Activated CD4-positive, alpha-beta T cell treated with anti-CD3 and anti-CD28 coated beads for 36 hours (primary cell): ENCODE measurements at regions of chr1 and their contacts with region 1.

Region 1: GRCh38 chr1:220733090-220733601 is 15.0 kb upstream of the MTARC2 start:
- DNase-seq: peak; percentile 88
- ATAC-seq: peak; percentile 93
- H3K4me3 Mint-ChIP-seq: no peak overlapping the region
- H3K27ac Mint-ChIP-seq: peak overlapping the region; percentile 29
- H3K4me1 Mint-ChIP-seq: peaks cover 8% of the 10 kb centered on the region
- H3K27me3 Mint-ChIP-seq: peaks cover 3% of the 10 kb centered on the region

Region 2: DNA sequence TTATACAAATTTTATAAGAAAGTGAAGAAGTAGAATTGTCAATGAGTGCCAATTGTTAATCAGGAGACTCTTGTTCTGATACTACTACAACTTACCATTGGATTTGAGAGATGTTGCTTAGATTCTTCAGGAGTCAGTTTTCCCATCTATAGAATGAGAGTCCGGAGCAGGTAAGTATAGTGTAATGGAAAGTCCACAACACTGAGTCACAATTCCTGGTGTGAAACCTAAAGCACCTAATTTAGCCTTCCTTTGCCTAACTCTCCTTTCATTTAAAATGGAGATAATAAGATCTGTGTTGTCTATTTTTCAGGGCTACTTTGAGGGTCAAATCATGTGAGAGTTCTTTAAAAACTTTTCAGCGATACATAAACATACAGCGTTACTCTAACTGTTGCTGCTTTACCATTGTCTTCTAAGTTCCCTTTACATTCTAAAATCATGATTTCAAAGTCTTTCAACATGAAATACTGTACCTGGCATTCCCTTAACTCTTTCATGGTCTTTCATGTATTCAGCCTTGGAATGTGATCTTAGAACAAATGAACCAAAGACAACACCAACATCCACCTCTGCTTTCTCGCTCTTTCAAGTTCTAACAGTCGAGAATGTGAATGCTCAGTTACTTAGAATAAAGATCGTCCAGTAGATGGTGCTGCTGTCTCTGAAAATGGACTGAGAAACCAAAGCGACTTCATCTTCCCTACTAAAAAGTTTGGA is 895.7 kb before region 1 on chr1:
- CTCF ChIA-PET with region 1: no interaction called
- POLR2A ChIA-PET with region 1: no interaction called
- intact Hi-C with region 1: loop called in 1 of 2 experiments (anchors 5 kb)
- DNase-seq: no peak
- ATAC-seq: no peak
- H3K4me3 Mint-ChIP-seq: no peak overlapping the region
- H3K27ac Mint-ChIP-seq: no peak overlapping the region
- H3K4me1 Mint-ChIP-seq: no peaks in the 10 kb centered on the region
- H3K27me3 Mint-ChIP-seq: peaks cover 16% of the 10 kb centered on the region

Region 3: GRCh38 chr1:220217383-220217988 is 515.7 kb before region 1 on chr1:
- CTCF ChIA-PET with region 1: no interaction called
- POLR2A ChIA-PET with region 1: no interaction called
- intact Hi-C with region 1: loop called in 1 of 2 experiments (anchors 5 kb)
- DNase-seq: no peak
- ATAC-seq: no peak
- H3K4me3 Mint-ChIP-seq: no peak overlapping the region
- H3K27ac Mint-ChIP-seq: no peak overlapping the region
- H3K4me1 Mint-ChIP-seq: peaks cover 26% of the 10 kb centered on the region
- H3K27me3 Mint-ChIP-seq: no peaks in the 10 kb centered on the region

Region 4: DNA sequence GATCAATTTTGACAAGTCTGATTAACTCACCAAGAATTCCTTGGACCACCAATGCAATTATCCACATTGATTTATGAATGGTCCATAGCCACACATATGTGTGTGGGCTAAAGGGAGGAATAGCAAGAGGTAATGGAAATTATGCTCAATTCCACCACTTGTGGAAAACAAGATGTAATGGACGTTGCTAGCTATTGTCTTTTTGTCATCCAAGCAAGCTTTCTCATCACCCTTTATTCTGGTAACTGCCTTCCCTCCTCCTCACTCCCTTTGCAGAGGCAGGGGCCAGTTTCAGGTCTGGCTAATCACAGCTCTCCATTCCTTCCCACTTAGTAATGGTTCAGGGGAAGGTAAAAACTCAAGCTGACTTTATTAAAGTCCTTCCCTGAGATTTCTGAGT is 436.2 kb before region 1 on chr1:
- CTCF ChIA-PET with region 1: interaction called, 11 read pairs
- POLR2A ChIA-PET with region 1: no interaction called
- intact Hi-C with region 1: loop called in 1 of 2 experiments (anchors 1 kb)
- DNase-seq: no peak
- ATAC-seq: no peak
- H3K4me3 Mint-ChIP-seq: no peak overlapping the region
- H3K27ac Mint-ChIP-seq: no peak overlapping the region
- H3K4me1 Mint-ChIP-seq: no peaks in the 10 kb centered on the region
- H3K27me3 Mint-ChIP-seq: peaks cover 5% of the 10 kb centered on the region

Region 5: GRCh38 chr1:220680085-220680687 is 53.0 kb before region 1 on chr1:
- CTCF ChIA-PET with region 1: interaction called, 11 read pairs
- POLR2A ChIA-PET with region 1: no interaction called
- intact Hi-C with region 1: loop called in 1 of 2 experiments (anchors 1 kb)
- DNase-seq: peak; percentile 30
- ATAC-seq: peak; percentile 61
- H3K4me3 Mint-ChIP-seq: no peak overlapping the region
- H3K27ac Mint-ChIP-seq: no peak overlapping the region
- H3K4me1 Mint-ChIP-seq: no peaks in the 10 kb centered on the region
- H3K27me3 Mint-ChIP-seq: peaks cover 4% of the 10 kb centered on the region